Posterior vena cava (tissue), 2 donors: ENCODE measurements at regions of chr20 and their contacts with region 1.

Region 1: GRCh38 chr20:9978397-9979004 is 56.3 kb upstream of the ANKEF1 start:
- DNase-seq: no peak

Region 2: GRCh38 chr20:10079964-10080363 is 101.5 kb after region 1 on chr20:
- intact Hi-C with region 1: loop called in 1 of 2 experiments (anchors 10 kb)
- DNase-seq: no peak

Region 3: DNA sequence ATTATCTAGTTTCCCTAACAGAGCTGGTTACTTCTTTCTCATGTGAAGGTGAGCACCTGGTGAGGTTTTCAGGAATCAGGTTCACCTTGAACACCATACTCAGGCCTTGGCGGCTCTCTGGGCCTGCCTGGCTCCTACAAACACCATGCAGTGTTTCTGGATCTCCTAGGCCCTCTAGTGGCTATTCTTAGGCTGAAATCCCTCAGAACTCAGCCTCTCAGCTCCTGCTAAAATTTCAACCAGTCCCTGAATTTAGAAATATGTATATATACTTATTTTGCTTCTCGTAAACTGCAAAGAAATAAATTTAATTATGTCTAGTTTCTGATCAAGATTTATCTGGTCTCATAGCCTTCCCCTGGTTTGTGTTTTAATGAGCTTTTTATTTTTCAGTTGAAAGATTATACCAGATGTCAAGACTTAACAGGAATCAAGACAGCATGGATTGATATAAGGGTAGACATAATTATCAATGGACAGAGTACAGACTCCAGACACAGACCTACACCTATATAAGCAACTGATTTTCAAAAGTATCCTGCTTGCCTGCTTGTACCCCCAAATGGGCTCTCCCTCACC is 112.2 kb after region 1 on chr20:
- intact Hi-C with region 1: loop called (anchors 10 kb)
- DNase-seq: no peak

Region 4: GRCh38 chr20:10427060-10427692 is 448.7 kb after region 1 on chr20:
- intact Hi-C with region 1: loop called in 1 of 2 experiments (anchors 5 kb)
- DNase-seq: peak; percentile 87